ENCODE measurements at regions of chr15 and their contacts with region 1.

Region 1: DNA sequence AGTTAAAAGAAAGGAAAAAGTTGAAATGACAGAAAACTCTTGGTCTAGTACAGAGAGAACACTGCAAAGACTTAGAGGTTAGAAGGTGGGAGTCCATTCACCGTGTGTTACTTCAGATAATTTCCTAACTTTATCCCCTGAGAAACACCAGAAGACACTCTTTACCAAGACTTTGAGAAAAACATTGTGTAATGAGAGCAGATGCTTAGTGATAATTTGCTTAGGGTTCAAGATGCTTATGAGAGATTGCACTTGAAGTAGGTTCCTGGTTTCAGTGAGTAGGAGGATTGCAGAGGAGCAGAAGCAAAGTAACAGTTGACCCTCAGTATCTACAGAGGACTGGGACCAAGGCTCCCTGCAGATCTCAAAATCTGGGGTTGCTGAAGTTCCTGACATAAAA is 594.1 kb downstream of the NR2F2 start:
- DNase-seq: no peak
- ATAC-seq: no peak
- H3K4me3 ChIP-seq: no peak overlapping the region
- H3K27ac ChIP-seq: no peak overlapping the region
- H3K4me1 ChIP-seq: no peaks in the 10 kb centered on the region
- H3K27me3 ChIP-seq: no peaks in the 10 kb centered on the region
- CTCF ChIP-seq: no peak
- POLR2A ChIP-seq: no peak

Region 2: GRCh38 chr15:96889734-96890480 is 34.7 kb before region 1 on chr15:
- intact Hi-C with region 1: no loop called
- DNase-seq: peak in 1 of 3 donors; percentile 46
- ATAC-seq: peak; percentile 74 to 81 (median 76)
- H3K4me3 ChIP-seq: peak overlapping the region; percentile 21 to 48 (median 45)
- H3K27ac ChIP-seq: peak overlapping the region; percentile 29 to 42 (median 33)
- H3K4me1 ChIP-seq: peaks cover 0 to 6% (median 2%) of the 10 kb centered on the region in 4 donors
- H3K27me3 ChIP-seq: no peaks in the 10 kb centered on the region
- CTCF ChIP-seq: no peak
- POLR2A ChIP-seq: no peak

Region 3: DNA sequence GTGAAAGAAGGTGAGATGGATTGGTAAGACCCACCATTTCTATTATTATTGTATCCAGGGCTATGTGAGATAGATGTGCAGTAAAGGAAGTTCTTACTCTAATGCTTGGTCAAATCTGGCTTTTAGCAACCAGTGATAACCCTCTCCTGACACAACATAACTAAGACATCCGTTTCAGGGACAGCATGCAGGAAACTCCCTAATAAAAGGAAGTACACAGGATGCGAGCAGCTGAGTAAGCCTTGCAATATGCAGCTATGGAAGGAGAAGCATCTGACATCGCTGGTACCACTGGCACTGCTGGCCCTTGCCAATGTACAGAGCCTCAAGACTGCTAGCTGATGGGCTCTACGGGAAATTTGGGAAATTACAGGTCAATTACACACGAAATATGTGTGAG is 68.2 kb after region 1 on chr15:
- intact Hi-C with region 1: loop called in 1 of 2 experiments (anchors 10 kb)
- DNase-seq: no peak
- ATAC-seq: peak; percentile 56 to 76 (median 64)
- H3K4me3 ChIP-seq: no peak overlapping the region
- H3K27ac ChIP-seq: no peak overlapping the region
- H3K4me1 ChIP-seq: no peaks in the 10 kb centered on the region
- H3K27me3 ChIP-seq: no peaks in the 10 kb centered on the region
- CTCF ChIP-seq: no peak
- POLR2A ChIP-seq: no peak

Region 4: GRCh38 chr15:97026436-97027115 is 102.0 kb after region 1 on chr15:
- intact Hi-C with region 1: no loop called
- DNase-seq: no peak
- ATAC-seq: no peak
- H3K4me3 ChIP-seq: no peak overlapping the region
- H3K27ac ChIP-seq: no peak overlapping the region
- H3K4me1 ChIP-seq: no peaks in the 10 kb centered on the region
- H3K27me3 ChIP-seq: no peaks in the 10 kb centered on the region
- CTCF ChIP-seq: no peak
- POLR2A ChIP-seq: no peak